GM13976 (cell line): ENCODE measurements at regions of chr5 and their contacts with region 1.

Region 1: GRCh38 chr5:88724201-88724600 is 158.8 kb downstream of the MEF2C start:
- DNase-seq: no peak
- CTCF ChIP-seq: no peak

Region 2: DNA sequence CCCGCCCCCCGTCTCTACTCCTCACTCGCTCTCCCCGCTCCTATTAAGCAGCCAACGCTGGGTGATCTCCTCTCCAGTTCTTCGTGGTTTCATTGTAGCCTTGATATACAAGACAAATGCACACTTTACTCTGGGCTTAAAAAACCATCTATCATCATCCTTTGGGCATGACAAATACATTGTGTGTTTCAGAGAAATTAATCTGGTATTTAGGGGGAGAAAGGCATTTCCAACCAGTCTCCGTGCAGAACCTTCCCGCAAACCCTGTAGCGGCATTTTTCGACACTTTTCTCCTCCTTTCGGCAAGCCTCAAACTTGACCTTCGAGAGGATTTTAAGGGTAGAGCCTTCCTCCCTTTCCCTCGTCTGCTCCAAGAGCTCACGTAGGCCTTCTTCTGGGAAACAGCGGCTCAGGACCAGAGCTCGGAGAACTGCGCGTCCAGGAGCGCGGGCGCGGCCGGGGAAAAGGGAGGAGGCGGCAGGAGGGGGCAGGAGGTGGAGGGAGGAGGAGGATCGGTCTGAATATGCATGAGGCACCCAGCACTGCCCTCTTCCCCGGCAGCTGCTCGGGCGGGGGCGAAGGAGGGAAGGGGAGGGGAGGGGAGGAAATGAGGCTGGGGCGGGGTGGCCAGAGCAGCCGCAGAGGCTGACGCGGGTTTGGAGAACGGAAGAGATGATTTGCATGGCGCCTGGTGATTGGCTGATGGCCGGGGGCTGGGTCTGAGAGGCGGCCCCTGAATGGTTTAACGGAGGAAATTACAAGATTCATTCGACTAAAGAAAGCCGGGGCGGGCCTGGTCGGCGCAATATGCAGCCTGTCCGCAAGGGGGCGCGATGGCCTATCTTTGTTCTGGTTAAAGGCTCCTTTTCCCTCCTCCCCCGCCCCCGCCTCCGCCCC is 583.1 kb before region 1 on chr5:
- in situ Hi-C with region 1: no loop called
- DNase-seq: peak; percentile 88
- CTCF ChIP-seq: peak; percentile 60

Region 3: GRCh38 chr5:88660947-88661805 is 63.0 kb before region 1 on chr5:
- in situ Hi-C with region 1: no loop called
- DNase-seq: peak; percentile 88
- CTCF ChIP-seq: no peak

Region 4: GRCh38 chr5:89729623-89730301 is 1005.6 kb after region 1 on chr5:
- in situ Hi-C with region 1: loop called (anchors 25 kb)
- DNase-seq: no peak
- CTCF ChIP-seq: peak; percentile 6

Region 5: DNA sequence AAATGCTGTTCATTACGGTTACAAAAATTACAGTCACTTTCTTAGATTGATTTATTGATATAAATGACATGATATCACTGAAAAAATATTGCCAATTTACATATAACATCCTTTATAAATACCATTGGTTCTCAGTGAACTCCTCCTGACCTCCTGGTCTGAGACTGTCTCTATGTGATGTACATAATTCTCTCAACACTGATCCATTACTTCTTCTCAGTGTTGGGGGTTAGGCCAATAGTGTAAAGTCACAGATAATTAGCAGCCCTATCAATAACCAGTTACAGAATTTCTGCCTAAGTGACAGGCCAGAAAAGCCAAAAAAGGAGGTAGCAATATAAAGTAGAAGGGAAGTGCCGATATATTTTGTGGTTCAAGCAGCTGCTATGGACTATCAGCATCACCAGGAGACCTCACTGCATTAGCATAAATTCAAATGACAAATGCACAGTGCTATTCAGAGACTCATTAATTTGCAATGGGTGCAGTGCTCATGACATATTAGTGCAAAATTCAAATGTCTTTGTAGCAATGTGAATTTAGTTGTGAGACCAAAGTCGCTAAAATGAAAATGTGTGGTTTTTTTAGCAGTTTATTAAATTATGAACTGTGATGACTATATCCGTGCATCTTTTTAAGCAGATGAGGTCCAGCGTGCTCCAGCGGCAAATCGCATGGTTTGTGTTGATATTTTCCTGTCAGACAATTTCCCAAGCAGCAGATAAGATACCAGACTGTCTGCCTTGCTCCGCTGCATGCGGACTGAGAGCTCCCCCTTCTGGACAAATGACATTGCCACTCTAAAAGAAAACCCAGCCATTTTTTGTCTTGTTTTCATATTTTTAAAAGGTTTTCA is 1540.7 kb after region 1 on chr5:
- in situ Hi-C with region 1: loop called (anchors 25 kb)
- DNase-seq: peak; percentile 5
- CTCF ChIP-seq: peak; percentile 86